Activated naive CD4-positive, alpha-beta T cell treated with anti-CD3 and anti-CD28 coated beads for 36 hours (primary cell): ENCODE measurements at regions of chr2 and their contacts with region 1.

Region 1: DNA sequence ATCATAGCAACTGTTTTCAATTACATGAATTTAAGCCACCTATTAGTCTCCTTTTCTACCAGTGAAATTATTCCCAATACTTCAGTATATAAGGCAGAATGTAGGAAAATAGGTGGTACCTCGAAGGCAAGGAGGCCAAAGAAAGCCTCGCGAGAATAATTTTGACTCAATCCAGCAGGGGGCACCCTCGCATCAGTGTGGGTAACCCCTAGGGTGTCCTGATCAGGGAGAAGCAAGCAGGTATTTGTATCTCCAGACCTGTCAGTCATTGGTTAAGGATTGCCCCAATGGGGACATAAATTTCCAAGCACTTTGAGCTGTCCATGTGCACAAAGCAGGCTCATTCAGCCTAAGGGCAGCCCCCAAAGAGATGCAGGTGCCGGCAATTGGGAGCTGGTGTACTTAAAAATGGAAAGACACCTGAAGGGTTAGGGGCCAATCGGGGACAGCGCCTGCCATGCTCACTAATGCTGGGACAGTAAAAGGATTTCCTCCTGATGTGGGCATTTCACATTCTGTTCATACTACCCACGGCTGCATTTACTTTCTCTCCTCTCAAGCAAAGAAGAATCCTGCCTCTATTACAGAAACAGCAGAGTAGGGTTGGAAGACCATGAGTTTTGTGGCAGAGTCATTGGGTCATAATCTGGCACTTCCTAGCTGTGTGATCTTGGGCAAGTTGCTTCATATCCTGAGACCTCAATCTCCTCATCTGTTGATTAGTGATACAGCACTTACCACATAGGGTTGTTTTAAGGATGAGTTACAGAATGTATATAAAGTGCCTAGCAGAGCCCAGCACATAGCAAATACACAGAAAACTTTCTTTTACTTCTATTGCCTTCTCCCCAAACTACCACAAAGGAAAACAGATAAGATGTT is 136.1 kb downstream of the ICOS start:
- DNase-seq: peak; percentile 92
- H3K4me3 Mint-ChIP-seq: no peak overlapping the region
- H3K27ac Mint-ChIP-seq: no peak overlapping the region
- H3K4me1 Mint-ChIP-seq: peaks cover 10% of the 10 kb centered on the region
- H3K27me3 Mint-ChIP-seq: peaks cover 2% of the 10 kb centered on the region

Region 2: DNA sequence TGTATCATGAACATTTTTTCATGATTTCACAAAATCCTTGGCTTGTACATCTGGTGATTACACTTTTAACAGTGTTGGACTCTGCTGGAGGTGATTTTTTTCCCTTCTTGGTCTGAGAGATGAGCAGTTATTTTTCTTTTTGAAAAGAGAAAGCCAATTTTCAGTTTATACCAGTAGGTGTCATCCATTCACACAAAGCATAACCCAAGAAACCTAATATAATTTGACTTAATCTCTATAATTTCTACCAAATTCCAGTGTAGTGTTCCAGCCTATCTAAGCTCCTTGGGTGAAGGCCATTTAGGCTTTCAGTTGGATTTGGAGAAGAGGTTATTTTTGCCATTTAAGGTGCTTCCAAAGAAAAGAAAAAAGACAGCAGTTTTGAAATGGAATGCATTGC is 143.8 kb before region 1 on chr2:
- CTCF ChIA-PET with region 1: interaction called, 25 read pairs
- intact Hi-C with region 1: loop called (anchors 5 kb)
- DNase-seq: no peak
- H3K4me3 Mint-ChIP-seq: no peak overlapping the region
- H3K27ac Mint-ChIP-seq: no peak overlapping the region
- H3K4me1 Mint-ChIP-seq: peaks cover 43% of the 10 kb centered on the region
- H3K27me3 Mint-ChIP-seq: no peaks in the 10 kb centered on the region

Region 3: GRCh38 chr2:204060841-204061240 is 11.8 kb before region 1 on chr2:
- CTCF ChIA-PET with region 1: interaction called, 19 read pairs
- intact Hi-C with region 1: no loop called
- DNase-seq: no peak
- H3K4me3 Mint-ChIP-seq: no peak overlapping the region
- H3K27ac Mint-ChIP-seq: no peak overlapping the region
- H3K4me1 Mint-ChIP-seq: peaks cover 2% of the 10 kb centered on the region
- H3K27me3 Mint-ChIP-seq: no peaks in the 10 kb centered on the region

Region 4: GRCh38 chr2:204177977-204178540 is 105.4 kb after region 1 on chr2:
- CTCF ChIA-PET with region 1: interaction called, 142 read pairs
- intact Hi-C with region 1: loop called (anchors 1 kb)
- DNase-seq: peak; percentile 88
- H3K4me3 Mint-ChIP-seq: no peak overlapping the region
- H3K27ac Mint-ChIP-seq: no peak overlapping the region
- H3K4me1 Mint-ChIP-seq: no peaks in the 10 kb centered on the region
- H3K27me3 Mint-ChIP-seq: peaks cover 5% of the 10 kb centered on the region

Region 5: DNA sequence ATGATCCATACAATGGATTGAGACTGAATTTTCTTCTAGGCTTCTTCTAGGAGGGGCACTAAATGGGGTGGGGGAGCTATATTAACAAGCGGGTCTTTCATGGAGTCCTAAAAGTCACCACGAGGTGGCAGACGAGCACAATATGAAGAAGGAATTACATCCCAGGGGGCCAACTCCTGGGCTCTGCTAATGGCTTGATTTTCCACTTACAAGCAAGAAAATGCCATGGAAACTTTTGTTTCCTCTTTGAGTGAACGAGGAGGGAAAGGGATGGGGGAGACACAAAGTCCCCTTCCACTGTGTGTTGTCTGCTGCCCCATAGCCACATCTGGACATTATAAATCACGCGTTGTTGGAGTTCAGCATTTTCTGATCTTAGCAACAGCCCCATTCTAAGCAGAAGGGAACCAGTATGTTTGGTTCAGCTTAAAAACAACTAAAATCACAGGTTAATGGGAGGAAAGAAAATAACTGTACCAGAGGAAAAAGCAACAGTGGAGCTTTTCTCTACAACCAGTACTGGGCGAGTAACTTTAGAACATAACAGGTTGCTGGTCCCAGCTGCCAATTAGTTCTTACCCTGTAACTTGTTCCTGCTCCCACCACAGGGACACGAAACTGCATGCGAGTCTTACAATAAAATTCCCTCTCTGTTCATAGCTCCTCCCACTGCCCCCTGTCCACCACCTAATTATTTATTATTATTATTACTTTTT is 187.6 kb after region 1 on chr2:
- CTCF ChIA-PET with region 1: interaction called, 24 read pairs
- intact Hi-C with region 1: loop called (anchors 5 kb)
- DNase-seq: peak; percentile 68
- H3K4me3 Mint-ChIP-seq: no peak overlapping the region
- H3K27ac Mint-ChIP-seq: no peak overlapping the region
- H3K4me1 Mint-ChIP-seq: no peaks in the 10 kb centered on the region
- H3K27me3 Mint-ChIP-seq: peaks cover 16% of the 10 kb centered on the region